ENCODE measurements at regions of chr20 and their contacts with region 1.

Region 1: GRCh38 chr20:43003318-43003944 is 186.3 kb downstream of the PTPRT start:
- DNase-seq: no peak

Region 2: GRCh38 chr20:42986143-42986773 is 17.2 kb before region 1 on chr20:
- intact Hi-C with region 1: no loop called
- DNase-seq: no peak

Region 3: DNA sequence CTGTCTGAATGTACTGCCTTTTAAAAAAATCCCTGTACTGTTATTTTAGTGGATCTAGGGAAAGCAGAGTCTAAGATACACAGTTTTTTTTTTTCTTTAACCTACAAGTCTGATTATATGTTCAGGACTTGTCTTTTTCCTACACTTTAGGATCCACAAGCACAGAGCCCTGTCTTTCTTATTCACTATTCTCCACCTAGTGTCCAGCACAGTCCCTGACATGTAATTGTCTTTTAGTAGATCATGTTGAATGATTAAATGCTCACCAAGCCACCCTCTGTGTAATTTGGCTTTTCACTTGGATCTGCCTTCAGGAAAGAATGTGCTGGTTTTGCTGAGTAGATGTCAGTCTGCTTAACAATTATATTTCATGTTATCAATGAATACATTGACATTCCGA is 1846.3 kb after region 1 on chr20:
- intact Hi-C with region 1: loop called in 1 of 2 experiments (anchors 10 kb)
- DNase-seq: no peak